Transverse colon (tissue), 4 donors: ENCODE measurements at regions of chr7 and their contacts with region 1.

Region 1: DNA sequence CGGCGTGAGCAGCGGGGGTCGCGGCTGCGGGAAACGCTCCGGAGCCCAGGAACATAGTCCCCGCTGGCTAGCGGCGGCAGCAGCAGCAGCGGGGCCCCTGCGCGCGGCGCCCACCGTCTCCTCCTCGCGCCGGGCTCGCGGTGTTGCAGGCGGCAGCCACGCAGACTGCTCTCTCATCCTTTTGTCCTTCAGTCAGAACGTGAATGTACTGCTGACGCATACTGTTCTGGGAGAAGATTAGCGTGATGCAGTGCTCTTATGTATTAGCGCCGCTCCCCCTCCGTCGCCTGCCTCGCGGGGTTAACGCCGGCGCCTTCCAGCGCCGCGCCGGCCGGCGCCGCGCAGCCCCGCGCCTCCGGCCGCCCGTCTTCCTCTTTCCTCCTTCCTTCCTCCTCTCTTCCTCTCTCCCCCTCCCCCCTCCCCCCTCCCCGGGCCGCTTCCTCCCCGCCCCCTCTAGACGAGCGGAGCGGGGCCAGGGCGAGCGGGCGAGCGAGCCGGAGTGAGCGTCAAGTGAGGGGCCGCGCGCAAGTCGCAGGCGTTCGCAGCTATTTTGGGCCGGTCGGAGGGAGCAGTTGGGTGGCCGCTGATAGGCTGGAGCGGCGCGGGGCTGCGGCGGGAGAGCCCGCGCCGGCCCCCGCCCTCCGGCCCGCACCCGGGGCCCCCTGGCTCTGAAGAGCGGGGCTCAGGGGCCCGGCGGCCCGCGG is 816 bp upstream of the LRRC4 start:
- DNase-seq: peak; percentile 33
- H3K4me3 ChIP-seq: peak overlapping the region; percentile 38 to 65 (median 44)
- H3K27ac ChIP-seq: peak overlapping the region in 2 of 4 donors; percentile 8 to 36
- H3K4me1 ChIP-seq: peaks cover 8 to 25% (median 23%) of the 10 kb centered on the region in 4 donors
- H3K27me3 ChIP-seq: peaks cover 26% of the 10 kb centered on the region
- CTCF ChIP-seq: peak in 1 of 5 experiments; percentile 22
- EP300 ChIP-seq: no peak
- POLR2A ChIP-seq: no peak

Region 2: DNA sequence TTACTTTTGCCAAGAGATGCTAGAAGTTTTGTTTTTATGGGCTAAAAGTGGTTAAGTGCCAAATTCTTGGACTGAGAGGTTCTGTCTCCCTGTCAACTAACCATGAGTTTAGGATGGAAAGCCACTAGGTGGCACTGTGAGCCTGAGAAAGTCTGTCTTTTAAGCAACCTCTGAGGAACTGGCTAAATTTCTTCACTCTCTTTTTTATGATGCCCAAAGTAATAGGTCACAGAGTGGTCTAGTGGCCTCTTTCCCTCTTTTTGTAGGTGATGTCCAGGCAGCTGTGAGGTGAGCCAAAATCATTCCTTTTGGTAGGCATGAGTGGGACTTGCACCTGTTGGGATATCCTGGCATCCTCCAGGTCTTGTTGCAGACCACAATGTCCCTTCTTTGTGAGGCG is 323.3 kb before region 1 on chr7:
- in situ Hi-C with region 1: loop called in 1 of 4 experiments (anchors 25 kb)
- intact Hi-C with region 1: loop called (anchors 10 kb)
- DNase-seq: peak; percentile 75
- H3K4me3 ChIP-seq: no peak overlapping the region
- H3K27ac ChIP-seq: no peak overlapping the region
- H3K4me1 ChIP-seq: peaks cover 0 to 3% (median 0%) of the 10 kb centered on the region in 4 donors
- H3K27me3 ChIP-seq: no peaks in the 10 kb centered on the region
- CTCF ChIP-seq: peak; percentile 68 to 79 (median 77)
- EP300 ChIP-seq: no peak
- POLR2A ChIP-seq: no peak

Region 3: GRCh38 chr7:127717502-127718339 is 314.3 kb before region 1 on chr7:
- in situ Hi-C with region 1: loop called in 1 of 4 experiments (anchors 25 kb)
- intact Hi-C with region 1: loop called (anchors 10 kb)
- DNase-seq: no peak
- H3K4me3 ChIP-seq: no peak overlapping the region
- H3K27ac ChIP-seq: no peak overlapping the region
- H3K4me1 ChIP-seq: no peaks in the 10 kb centered on the region
- H3K27me3 ChIP-seq: no peaks in the 10 kb centered on the region
- CTCF ChIP-seq: no peak
- EP300 ChIP-seq: no peak
- POLR2A ChIP-seq: no peak

Region 4: DNA sequence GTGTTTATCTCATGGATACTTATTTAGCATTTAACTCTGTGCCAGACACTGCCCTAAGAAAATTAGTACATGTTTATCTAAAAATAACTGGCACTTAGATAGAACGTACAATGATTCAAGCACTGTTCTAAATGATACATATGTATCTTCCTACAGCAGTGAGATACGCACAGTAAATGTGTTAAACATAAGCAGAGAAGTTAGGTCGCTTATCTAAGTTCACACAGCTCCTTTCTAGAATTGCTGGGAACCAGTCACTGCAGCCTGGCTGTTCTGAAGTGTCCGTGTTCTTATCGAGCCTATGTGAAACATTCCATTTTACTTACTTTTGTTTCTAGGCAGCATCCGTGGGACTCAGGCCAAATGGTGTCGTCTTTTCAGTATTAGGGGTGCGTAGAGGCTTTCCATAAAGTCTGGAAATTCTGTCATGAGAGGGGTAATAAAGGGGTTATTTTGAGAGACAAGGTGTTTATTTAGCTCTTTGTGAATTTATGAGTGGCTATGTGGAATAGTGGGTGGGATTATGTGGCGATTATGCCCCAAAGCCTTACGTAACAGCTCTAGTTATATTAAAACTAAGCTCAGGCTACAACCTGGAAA is 193.1 kb before region 1 on chr7:
- in situ Hi-C with region 1: no loop called
- intact Hi-C with region 1: loop called (anchors 10 kb)
- DNase-seq: no peak
- H3K4me3 ChIP-seq: no peak overlapping the region
- H3K27ac ChIP-seq: peak overlapping the region in 3 of 4 donors; percentile 15 to 34 (median 17)
- H3K4me1 ChIP-seq: peaks cover 0 to 5% (median 2%) of the 10 kb centered on the region in 4 donors
- H3K27me3 ChIP-seq: no peaks in the 10 kb centered on the region
- CTCF ChIP-seq: no peak
- EP300 ChIP-seq: no peak
- POLR2A ChIP-seq: no peak